Heart left ventricle (tissue), 16 donors: ENCODE measurements at regions of chr11 and their contacts with region 1.

Region 1: DNA sequence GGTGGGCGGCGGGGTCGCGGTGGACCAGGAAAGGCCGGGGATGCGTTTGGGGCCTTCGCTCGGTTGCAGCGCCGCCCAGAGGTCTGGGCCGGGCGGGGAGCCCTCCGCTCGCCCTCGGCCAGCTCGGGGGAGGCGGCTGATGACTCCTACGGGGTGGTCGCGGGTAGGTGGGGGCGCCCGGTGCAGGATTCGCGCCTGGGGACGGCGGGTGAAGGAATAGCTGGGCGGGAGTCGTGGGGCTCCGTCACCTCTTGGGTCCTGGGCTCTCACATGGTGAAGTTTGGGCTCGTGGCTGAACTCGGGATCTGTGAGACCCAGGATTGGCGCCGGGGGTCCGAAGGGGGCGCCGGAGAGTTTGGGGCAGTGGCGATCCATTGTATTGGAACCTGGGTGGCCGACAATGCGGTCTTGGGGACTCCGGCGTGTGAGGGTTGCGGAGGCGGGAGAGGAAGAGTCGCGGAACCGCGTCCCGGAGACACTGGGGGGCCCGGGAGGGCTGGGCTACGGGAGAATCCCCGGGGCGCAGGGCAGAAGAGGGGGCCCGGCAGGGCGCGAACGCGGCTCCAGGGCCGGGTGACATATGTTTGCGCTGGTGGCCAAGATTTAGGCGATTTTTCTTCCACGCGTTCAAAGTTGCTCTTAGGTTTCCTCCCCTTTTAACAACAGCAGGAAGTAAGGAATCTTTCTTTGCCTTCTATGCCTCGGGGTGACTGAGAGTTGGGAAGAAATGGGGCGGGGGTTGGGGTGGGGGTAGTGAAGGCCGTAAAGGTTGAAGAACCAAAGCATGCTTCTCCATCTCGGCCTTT is 935 bp downstream of the QSER1 start:
- DNase-seq: peak; percentile 45 to 65 (median 49)
- ATAC-seq: peak; percentile 49 to 62 (median 59)
- H3K4me3 ChIP-seq: peak overlapping the region; percentile 86 to 99 (median 92)
- H3K27ac ChIP-seq: peak overlapping the region; percentile 54 to 98 (median 94)
- H3K4me1 ChIP-seq: peaks cover 0 to 33% (median 6%) of the 10 kb centered on the region in 12 donors
- H3K27me3 ChIP-seq: no peaks in the 10 kb centered on the region
- CTCF ChIP-seq: peak in 10 of 12 donors; percentile 25 to 68 (median 44)
- POLR2A ChIP-seq: no peak

Region 2: DNA sequence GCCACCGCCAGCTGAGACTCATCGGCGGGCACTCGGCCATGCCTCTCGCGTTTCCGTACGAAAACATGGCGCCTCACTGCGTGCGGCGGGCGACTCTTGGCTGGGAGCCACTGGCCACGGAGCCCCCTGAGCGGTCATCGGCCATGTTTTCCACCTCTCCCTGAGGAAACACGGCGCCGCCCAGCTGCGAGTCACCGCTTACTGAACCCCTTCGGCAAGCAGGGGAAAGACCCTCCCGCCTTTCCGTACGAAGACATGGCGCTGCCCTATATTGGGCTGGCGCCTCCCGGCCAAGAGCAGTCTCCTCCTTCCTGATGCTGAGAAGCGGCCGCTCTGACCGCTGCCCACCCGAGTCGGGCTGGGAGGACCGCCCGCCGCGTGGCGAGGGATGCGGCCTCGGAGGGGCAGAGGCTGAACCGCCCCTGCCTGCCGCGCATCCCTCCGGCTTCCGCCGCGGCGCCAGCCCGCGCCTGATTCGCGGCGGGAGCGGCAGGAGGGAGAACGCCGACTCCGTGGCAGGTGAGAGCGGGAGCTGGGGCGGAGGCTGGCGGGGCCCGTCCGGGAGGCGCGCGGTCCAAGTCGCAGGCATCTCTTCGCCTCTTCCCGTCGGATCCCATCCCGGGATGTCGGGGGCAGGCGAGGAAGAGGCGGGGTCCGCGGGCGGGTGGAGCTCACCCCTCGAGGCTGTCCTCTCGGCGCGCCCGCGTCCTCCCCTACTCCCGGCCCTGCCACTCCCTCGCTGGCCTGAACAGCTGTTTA is 145.9 kb after region 1 on chr11 and contains the start of gene TCP11L1:
- intact Hi-C with region 1: loop called in 2 of 10 experiments (anchors 5 to 10 kb)
- DNase-seq: peak; percentile 89 to 97 (median 94)
- ATAC-seq: peak; percentile 90 to 97 (median 95)
- H3K4me3 ChIP-seq: peak within 1 kb of the TSS; percentile 70 to 99 (median 86)
- H3K27ac ChIP-seq: peak within 1 kb of the TSS; percentile 86 to 99 (median 98)
- H3K4me1 ChIP-seq: peaks cover 0 to 25% (median 8%) of the 10 kb centered on the region in 12 donors
- H3K27me3 ChIP-seq: no peaks in the 10 kb centered on the region
- CTCF ChIP-seq: peak in 2 of 12 donors; percentile 3 to 21
- POLR2A ChIP-seq: peak in 1 of 2 donors; percentile 39
- total RNA-seq, gene TCP11L1: 4.8 to 13.9 (median 9.6) TPM